Activated naive CD4-positive, alpha-beta T cell treated with anti-CD3 and anti-CD28 coated beads for 36 hours (primary cell): ENCODE measurements at regions of chr12 and their contacts with region 1.

Region 1: DNA sequence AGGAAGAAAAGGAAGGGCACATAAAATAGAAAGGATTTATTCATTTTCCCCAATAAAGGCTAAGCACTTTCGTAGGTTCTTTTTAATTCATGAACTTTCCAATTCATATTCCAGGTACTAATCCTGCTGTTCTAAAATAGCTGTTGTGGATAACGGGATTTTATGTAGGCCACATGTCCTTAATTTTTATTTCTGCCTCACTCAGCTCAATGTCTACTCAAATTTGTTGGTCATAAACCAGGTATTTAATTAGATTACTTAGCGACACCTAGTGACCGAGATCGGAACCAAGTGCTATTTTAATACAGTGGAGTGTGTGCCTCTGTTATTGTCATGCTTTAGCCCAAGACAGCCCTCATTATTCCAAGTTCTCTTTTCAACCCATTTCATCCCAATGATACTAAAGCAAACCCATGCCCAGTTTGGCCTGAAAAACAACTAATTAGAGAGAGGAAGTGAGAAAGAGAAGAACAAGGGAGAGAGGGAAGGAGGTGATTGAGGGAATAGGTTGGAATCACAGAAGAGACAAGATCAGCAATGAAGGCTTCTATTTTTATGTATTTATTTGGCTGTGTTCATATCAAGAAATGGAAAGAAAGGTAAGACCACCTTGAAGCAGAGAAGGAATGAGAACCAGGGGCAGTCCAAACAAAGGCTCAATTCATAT is 45.9 kb upstream of the IFNG-AS1 start:
- DNase-seq: peak; percentile 87
- H3K4me3 Mint-ChIP-seq: no peak overlapping the region
- H3K27ac Mint-ChIP-seq: no peak overlapping the region
- H3K4me1 Mint-ChIP-seq: no peaks in the 10 kb centered on the region
- H3K27me3 Mint-ChIP-seq: peaks cover 3% of the 10 kb centered on the region

Region 2: GRCh38 chr12:67025543-67026114 is 917.7 kb before region 1 on chr12:
- CTCF ChIA-PET with region 1: interaction called, 3 read pairs
- intact Hi-C with region 1: loop called (anchors 10 kb)
- DNase-seq: peak; percentile 67
- H3K4me3 Mint-ChIP-seq: no peak overlapping the region
- H3K27ac Mint-ChIP-seq: no peak overlapping the region
- H3K4me1 Mint-ChIP-seq: peaks cover 3% of the 10 kb centered on the region
- H3K27me3 Mint-ChIP-seq: no peaks in the 10 kb centered on the region

Region 3: DNA sequence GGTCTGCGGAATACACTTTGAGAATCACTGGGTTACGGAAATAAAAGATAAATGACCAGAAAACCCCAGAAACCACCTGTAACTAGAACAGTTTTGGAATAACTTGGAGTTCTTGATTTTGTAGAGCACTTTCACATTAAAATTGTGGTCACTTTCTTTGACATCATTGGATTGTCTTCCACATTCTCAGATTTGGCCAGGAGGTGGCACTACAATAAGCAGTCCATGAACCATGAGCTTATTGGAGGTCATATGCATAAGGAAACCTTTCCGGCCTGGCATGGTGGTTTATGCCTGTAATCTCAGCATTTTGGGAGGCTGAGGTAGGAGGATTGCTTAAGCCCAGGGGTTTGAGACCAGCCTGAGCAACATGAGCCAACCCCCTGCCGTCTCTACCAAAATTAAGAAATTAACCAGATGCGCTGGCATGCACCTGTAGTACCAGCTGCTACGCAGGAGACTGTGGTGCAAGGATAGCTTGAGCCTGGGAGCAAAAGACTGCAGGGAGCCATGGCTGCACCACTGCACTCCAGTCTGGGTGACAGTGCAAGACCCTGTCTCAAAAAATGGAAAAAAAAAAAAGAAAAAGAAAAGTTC is 781.9 kb before region 1 on chr12:
- CTCF ChIA-PET with region 1: interaction called, 3 read pairs
- intact Hi-C with region 1: loop called (anchors 1 kb)
- DNase-seq: peak; percentile 70
- H3K4me3 Mint-ChIP-seq: no peak overlapping the region
- H3K27ac Mint-ChIP-seq: no peak overlapping the region
- H3K4me1 Mint-ChIP-seq: no peaks in the 10 kb centered on the region
- H3K27me3 Mint-ChIP-seq: no peaks in the 10 kb centered on the region

Region 4: GRCh38 chr12:67355578-67356379 is 587.6 kb before region 1 on chr12:
- CTCF ChIA-PET with region 1: interaction called, 36 read pairs
- intact Hi-C with region 1: loop called (anchors 1 kb)
- DNase-seq: peak; percentile 17
- H3K4me3 Mint-ChIP-seq: no peak overlapping the region
- H3K27ac Mint-ChIP-seq: no peak overlapping the region
- H3K4me1 Mint-ChIP-seq: peaks cover 25% of the 10 kb centered on the region
- H3K27me3 Mint-ChIP-seq: no peaks in the 10 kb centered on the region

Region 5: GRCh38 chr12:67441736-67442346 is 501.5 kb before region 1 on chr12:
- CTCF ChIA-PET with region 1: interaction called, 4 read pairs
- intact Hi-C with region 1: loop called (anchors 2 kb)
- DNase-seq: peak; percentile 93
- H3K4me3 Mint-ChIP-seq: peak overlapping the region; percentile 7
- H3K27ac Mint-ChIP-seq: no peak overlapping the region
- H3K4me1 Mint-ChIP-seq: peaks cover 19% of the 10 kb centered on the region
- H3K27me3 Mint-ChIP-seq: no peaks in the 10 kb centered on the region

Region 6: DNA sequence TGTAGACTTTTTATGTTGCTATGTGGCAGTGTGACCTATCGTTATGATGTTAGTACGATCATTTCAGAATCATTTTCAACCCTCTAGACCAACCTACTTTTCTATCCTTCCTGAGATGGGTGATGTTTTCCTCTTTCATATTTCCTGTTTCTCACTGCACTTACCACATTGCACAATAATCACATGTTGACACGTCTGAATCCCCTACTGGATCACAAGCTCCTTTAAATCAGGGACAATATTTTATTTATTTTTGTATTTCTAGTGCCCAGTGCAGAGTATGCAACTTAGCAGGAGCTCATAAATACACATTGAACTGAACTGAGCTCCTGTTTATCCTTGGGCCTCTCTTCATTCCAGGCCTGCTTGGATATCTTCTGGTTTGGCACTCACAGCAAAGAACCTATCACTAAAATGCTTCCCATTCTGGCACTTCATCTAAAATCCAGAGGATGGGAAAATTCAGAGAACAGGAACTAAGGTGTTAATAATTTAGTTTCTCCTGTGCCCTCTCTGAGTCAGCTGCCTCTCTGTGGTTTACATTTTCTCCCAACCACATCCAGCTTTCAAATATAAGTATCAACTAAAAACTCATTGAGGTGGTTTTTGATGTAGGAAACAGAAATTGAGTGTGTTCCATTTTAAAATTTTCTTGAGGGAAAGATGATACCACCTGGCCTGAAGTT is 364.2 kb before region 1 on chr12:
- CTCF ChIA-PET with region 1: interaction called, 3 read pairs
- intact Hi-C with region 1: loop called (anchors 10 kb)
- DNase-seq: peak; percentile 31
- H3K4me3 Mint-ChIP-seq: no peak overlapping the region
- H3K27ac Mint-ChIP-seq: no peak overlapping the region
- H3K4me1 Mint-ChIP-seq: peaks cover 38% of the 10 kb centered on the region
- H3K27me3 Mint-ChIP-seq: peaks cover 3% of the 10 kb centered on the region

Region 7: GRCh38 chr12:67804168-67804567 is 139.2 kb before region 1 on chr12:
- CTCF ChIA-PET with region 1: interaction called, 3 read pairs
- intact Hi-C with region 1: loop called (anchors 5 kb)
- DNase-seq: peak; percentile 73
- H3K4me3 Mint-ChIP-seq: no peak overlapping the region
- H3K27ac Mint-ChIP-seq: no peak overlapping the region
- H3K4me1 Mint-ChIP-seq: peaks cover 14% of the 10 kb centered on the region
- H3K27me3 Mint-ChIP-seq: no peaks in the 10 kb centered on the region

Region 8: GRCh38 chr12:68067762-68068376 is 124.5 kb after region 1 on chr12:
- CTCF ChIA-PET with region 1: no interaction called
- intact Hi-C with region 1: no loop called
- DNase-seq: no peak
- H3K4me3 Mint-ChIP-seq: no peak overlapping the region
- H3K27ac Mint-ChIP-seq: no peak overlapping the region
- H3K4me1 Mint-ChIP-seq: peaks cover 5% of the 10 kb centered on the region
- H3K27me3 Mint-ChIP-seq: no peaks in the 10 kb centered on the region